ENCODE measurements at regions of chr14 and their contacts with region 1.

Region 1: GRCh38 chr14:80987235-80988032 is 32.0 kb downstream of the TSHR start:
- DNase-seq: peak; percentile 89
- H3K4me3 ChIP-seq: no peak overlapping the region
- H3K27ac ChIP-seq: peak overlapping the region; percentile 13
- H3K4me1 ChIP-seq: peaks cover 50% of the 10 kb centered on the region
- CTCF ChIP-seq: peak; percentile 98

Region 2: DNA sequence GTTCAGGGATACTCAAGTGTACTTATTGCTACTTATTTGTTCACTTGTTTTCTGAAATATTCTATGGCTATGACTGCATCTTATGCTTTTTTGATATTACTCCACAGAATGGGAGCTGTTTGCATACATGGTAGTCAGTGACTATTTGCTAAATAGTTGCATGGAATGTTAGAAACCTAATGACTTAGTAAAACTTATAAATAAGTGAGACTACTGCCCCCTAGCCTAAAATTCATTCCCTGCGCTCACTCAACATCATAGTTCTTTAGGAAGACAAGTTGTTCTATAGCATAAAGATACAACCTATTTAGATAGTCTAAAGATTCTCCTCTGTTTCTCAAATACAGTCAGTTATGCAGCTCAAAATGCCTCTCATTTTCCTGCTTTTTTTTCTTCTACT is 351.4 kb before region 1 on chr14:
- CTCF ChIA-PET with region 1: no interaction called
- POLR2A ChIA-PET with region 1: no interaction called
- intact Hi-C with region 1: loop called (anchors 10 kb)
- DNase-seq: peak; percentile 11
- H3K4me3 ChIP-seq: no peak overlapping the region
- H3K27ac ChIP-seq: no peak overlapping the region
- H3K4me1 ChIP-seq: no peaks in the 10 kb centered on the region
- CTCF ChIP-seq: peak; percentile 74

Region 3: DNA sequence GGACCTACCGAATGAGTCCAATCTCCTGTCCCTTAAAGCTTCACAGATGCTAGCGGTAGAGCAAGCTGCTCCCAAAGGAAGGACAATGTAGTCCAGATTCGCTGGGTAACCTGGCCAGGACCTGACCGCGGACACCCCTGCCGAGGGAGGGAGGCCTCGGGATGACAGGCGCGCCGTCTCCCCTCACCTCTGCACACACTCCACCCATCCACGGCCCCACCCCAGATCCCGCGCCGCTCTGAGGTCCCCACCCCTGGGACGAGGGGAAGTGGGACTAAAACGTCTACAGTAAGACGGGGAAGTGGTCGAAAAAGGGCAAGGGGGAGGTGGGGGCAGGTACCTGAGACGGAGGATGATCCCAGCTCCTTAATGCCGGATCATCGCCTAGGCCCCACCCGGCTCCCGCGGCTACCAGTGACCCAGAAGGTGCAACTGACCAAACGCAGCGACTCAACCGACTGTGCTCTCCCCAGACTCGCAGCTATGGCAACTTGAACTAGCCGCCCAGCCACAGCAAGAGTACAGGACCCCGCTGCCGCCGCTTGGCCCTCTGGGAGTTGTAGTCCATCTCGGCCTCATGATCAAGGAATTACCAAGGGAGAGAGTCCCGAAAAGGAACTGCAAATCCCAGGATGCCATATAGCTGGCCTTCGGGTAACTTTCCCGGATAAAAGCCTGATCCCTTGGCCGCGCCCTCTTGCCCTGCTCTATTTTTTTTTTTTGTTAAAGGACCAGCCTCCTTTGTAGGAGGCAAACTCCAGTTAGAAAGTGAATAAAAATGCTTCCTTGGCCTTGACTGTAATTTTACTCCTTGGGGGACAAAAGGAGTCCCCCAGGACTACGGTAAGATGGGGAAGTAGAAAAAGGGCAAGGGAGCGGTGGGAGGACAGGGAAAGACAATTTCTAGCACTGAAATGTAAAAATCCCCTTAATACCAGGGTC is 45.9 kb before region 1 on chr14 and contains the start of gene CEP128:
- CTCF ChIA-PET with region 1: interaction called, 5 read pairs
- POLR2A ChIA-PET with region 1: interaction called, 15 read pairs
- intact Hi-C with region 1: no loop called
- DNase-seq: peak; percentile 97
- H3K4me3 ChIP-seq: peak within 1 kb of the TSS; percentile 91
- H3K27ac ChIP-seq: peak within 1 kb of the TSS; percentile 68
- H3K4me1 ChIP-seq: peaks cover 30% of the 10 kb centered on the region
- CTCF ChIP-seq: no peak
- total RNA-seq, gene CEP128: 71.9 and 76.9 TPM in 2 replicates

Region 4: GRCh38 chr14:80965037-80965436 is 22.4 kb before region 1 on chr14:
- CTCF ChIA-PET with region 1: interaction called, 3 read pairs
- POLR2A ChIA-PET with region 1: interaction called, 267 read pairs
- intact Hi-C with region 1: no loop called
- DNase-seq: no peak
- H3K4me3 ChIP-seq: no peak overlapping the region
- H3K27ac ChIP-seq: no peak overlapping the region
- H3K4me1 ChIP-seq: peaks cover 38% of the 10 kb centered on the region
- CTCF ChIP-seq: no peak

Region 5: GRCh38 chr14:81464247-81465002 is 477.0 kb after region 1 on chr14:
- CTCF ChIA-PET with region 1: interaction called, 3 read pairs
- POLR2A ChIA-PET with region 1: no interaction called
- intact Hi-C with region 1: loop called (anchors 5 kb)
- DNase-seq: peak; percentile 81
- H3K4me3 ChIP-seq: peak overlapping the region; percentile 55
- H3K27ac ChIP-seq: peak overlapping the region; percentile 86
- H3K4me1 ChIP-seq: peaks cover 55% of the 10 kb centered on the region
- CTCF ChIP-seq: peak; percentile 99

Measured in OCI-LY7 (cell line).